Activated T-helper 2 cell treated with anti-CD3 and anti-CD28 coated beads, Interferon-gamma antibody, Interleukin-2, Interleukin-4, amounts not matched to agents 10 μg/mL and 5 μg/mL and 100 μg/mL, durations not matched to agents 14 hours and 24 hours and 36 hours (primary cell): ENCODE measurements at regions of chr19 and their contacts with region 1.

Region 1: DNA sequence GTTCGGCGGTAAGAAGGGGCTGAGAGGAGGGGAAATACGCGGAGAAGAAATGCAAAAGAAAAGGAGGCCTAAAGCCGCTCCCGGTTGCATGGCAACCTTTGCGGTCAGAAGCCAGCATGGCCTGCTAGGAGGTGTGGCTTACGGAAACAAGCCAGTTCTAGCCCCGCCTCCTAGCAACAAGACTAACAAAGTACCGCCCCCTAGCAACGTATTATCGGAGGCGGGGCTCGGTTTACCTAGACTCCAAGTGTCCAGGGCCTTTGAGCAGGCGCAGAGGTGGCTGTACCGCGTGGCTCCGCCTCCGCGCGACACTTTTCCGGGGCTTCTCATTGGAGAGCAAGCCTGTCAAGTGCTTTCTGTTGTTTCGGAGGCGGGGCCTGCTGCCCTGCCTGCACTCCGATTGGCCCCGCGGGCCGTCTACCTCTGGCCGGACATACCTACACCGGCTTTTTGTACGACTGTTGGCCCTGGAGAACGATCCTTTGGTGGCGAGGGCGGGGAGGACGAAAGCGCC is 337 bp upstream of the CYTH2 start:
- DNase-seq: peak; percentile 100
- H3K4me3 Mint-ChIP-seq: peak overlapping the region; percentile 82
- H3K27ac Mint-ChIP-seq: peak overlapping the region; percentile 75
- H3K4me1 Mint-ChIP-seq: peaks cover 9% of the 10 kb centered on the region
- H3K27me3 Mint-ChIP-seq: no peaks in the 10 kb centered on the region

Region 2: DNA sequence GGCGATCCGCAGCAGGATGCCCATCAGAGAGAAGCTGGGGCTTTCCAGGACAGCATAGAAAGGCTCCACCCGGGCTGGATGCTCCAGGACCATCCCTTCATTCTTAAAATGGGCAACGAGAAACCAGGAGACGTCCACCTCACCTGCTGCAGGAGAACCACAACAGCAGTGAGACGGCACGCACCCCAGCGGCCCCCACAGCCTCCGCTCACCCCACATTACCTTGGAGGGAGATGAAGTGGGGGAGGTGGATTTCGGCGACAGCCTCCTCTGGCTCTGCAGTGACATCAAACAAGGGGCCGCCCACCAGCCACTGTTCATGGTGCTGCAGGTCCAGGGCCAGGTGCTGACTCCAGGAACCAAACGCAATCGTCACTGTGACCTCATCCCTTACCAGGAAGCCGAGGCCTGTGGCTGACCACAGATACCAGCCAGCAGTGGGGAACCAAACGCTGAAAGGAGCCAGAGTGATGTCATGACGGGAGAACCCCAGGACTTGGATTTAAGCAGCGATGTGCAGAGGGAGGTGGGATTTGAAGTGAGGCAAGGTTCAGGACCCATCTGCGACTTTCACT is 238.2 kb before region 1 on chr19:
- intact Hi-C with region 1: no loop called
- DNase-seq: peak; percentile 17
- H3K4me3 Mint-ChIP-seq: no peak overlapping the region
- H3K27ac Mint-ChIP-seq: peak overlapping the region; percentile 48
- H3K4me1 Mint-ChIP-seq: peaks cover 16% of the 10 kb centered on the region
- H3K27me3 Mint-ChIP-seq: no peaks in the 10 kb centered on the region

Region 3: GRCh38 chr19:48492925-48493717 is 24.3 kb after region 1 on chr19:
- intact Hi-C with region 1: loop called (anchors 2 kb)
- DNase-seq: peak; percentile 80
- H3K4me3 Mint-ChIP-seq: peak overlapping the region; percentile 72
- H3K27ac Mint-ChIP-seq: peak overlapping the region; percentile 23
- H3K4me1 Mint-ChIP-seq: peaks cover 22% of the 10 kb centered on the region
- H3K27me3 Mint-ChIP-seq: peaks cover 40% of the 10 kb centered on the region